AG04450 (cell line): ENCODE measurements at regions of chr18 and their contacts with region 1.

Region 1: DNA sequence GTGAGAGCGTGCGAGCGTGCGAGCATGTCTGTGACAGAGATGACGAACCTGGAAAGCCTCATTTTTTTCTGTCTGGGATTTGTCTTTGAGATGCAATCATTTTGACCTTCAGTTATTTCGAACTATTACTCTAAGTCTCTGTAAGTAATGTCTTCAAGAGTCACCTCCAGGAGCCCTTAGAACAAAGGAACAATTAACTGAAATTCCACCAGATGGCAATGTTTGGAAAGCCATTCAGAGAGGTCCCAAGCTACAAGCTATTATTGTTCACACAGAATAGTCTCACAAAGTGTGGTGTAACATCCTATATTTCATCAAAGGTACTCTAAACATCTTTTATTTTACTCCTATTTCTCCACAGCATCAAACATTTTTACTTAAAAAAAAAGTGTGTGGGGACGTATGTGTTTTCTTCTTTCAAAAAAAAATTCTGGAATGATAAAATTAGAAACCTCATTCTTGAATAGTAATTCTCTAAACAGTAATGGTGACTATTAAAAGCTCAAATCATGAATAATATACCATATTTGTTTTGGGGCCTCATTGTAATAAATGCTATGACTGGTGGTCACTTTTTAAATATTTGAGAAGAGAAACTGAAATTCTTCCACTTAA is 35.1 kb upstream of the MAPRE2 start:
- DNase-seq: peak; percentile 27
- H3K4me3 ChIP-seq: no peak overlapping the region
- H3K27ac ChIP-seq: no peak overlapping the region
- H3K27me3 ChIP-seq: peaks cover 3% of the 10 kb centered on the region
- CTCF ChIP-seq: peak; percentile 71

Region 2: GRCh38 chr18:35019933-35020332 is 13.9 kb after region 1 on chr18:
- CTCF ChIA-PET with region 1: interaction called, 10 read pairs
- POLR2A ChIA-PET with region 1: no interaction called
- DNase-seq: no peak
- H3K4me3 ChIP-seq: no peak overlapping the region
- H3K27ac ChIP-seq: no peak overlapping the region
- H3K27me3 ChIP-seq: peaks cover under 1% of the 10 kb centered on the region
- CTCF ChIP-seq: no peak

Region 3: GRCh38 chr18:35085450-35086380 is 79.6 kb after region 1 on chr18:
- CTCF ChIA-PET with region 1: no interaction called
- POLR2A ChIA-PET with region 1: no interaction called
- DNase-seq: no peak
- H3K4me3 ChIP-seq: no peak overlapping the region
- H3K27ac ChIP-seq: no peak overlapping the region
- H3K27me3 ChIP-seq: no peaks in the 10 kb centered on the region
- CTCF ChIP-seq: no peak